ENCODE measurements at regions of chr14 and their contacts with region 1.

Region 1: GRCh38 chr14:56585461-56586084 is 6.0 kb downstream of the TMEM260 start:
- DNase-seq: peak; percentile 99
- ATAC-seq: peak; percentile 87
- H3K4me3 ChIP-seq: no peak overlapping the region
- H3K27ac ChIP-seq: peak overlapping the region; percentile 75
- H3K4me1 ChIP-seq: peaks cover 52% of the 10 kb centered on the region
- H3K27me3 ChIP-seq: no peaks in the 10 kb centered on the region
- CTCF ChIP-seq: peak; percentile 79

Region 2: DNA sequence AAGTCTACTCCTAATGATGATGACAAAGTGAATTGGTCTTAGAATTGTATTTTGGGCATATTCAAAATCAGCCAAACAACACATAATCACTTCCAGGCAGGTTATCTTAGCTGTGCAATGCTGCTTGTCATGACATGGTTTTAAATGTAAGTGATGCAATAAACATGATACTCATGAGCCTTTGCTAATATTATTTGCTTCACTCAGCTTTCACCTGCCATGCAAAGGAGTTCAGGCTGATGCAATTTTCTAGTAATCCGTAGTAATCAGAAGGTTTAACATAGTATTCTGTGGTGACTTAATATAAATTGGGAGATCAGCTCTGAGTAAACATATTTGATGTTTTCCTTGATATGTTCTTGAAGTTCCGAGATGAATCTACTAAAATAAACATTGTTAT is 23.1 kb after region 1 on chr14:
- CTCF ChIA-PET with region 1: interaction called, 3 read pairs
- POLR2A ChIA-PET with region 1: no interaction called
- intact Hi-C with region 1: loop called (anchors 1 kb)
- DNase-seq: no peak
- ATAC-seq: peak; percentile 73; the same call in 1 of the 2 replicates
- H3K4me3 ChIP-seq: no peak overlapping the region
- H3K27ac ChIP-seq: no peak overlapping the region
- H3K4me1 ChIP-seq: no peaks in the 10 kb centered on the region
- H3K27me3 ChIP-seq: no peaks in the 10 kb centered on the region
- CTCF ChIP-seq: no peak